ENCODE measurements at regions of chr2 and their contacts with region 1.

Region 1: GRCh38 chr2:96509114-96509846 is 4.1 kb upstream of the NEURL3 start:
- DNase-seq: peak; percentile 67 to 85
- ATAC-seq: peak; percentile 74 to 86
- H3K4me3 ChIP-seq: no peak overlapping the region
- H3K27ac ChIP-seq: peak overlapping the region in 1 of 2 experiments; percentile 40; a peak in 1 of 6 replicates
- H3K4me1 ChIP-seq: peaks cover 24% of the 10 kb centered on the region
- CTCF ChIP-seq: peak; percentile 89
- EP300 ChIP-seq: no peak
- POLR2A ChIP-seq: no peak
- RAD21 ChIP-seq: peak; percentile 95 to 97

Region 2: GRCh38 chr2:96344011-96344410 is 165.3 kb before region 1 on chr2:
- CTCF ChIA-PET with region 1: interaction called, 16 read pairs
- POLR2A ChIA-PET with region 1: interaction called, 3 read pairs
- DNase-seq: no peak
- ATAC-seq: no peak
- H3K4me3 ChIP-seq: no peak overlapping the region
- H3K27ac ChIP-seq: no peak overlapping the region
- H3K4me1 ChIP-seq: peaks cover 30% of the 10 kb centered on the region
- CTCF ChIP-seq: no peak
- EP300 ChIP-seq: no peak
- POLR2A ChIP-seq: no peak
- RAD21 ChIP-seq: no peak

Region 3: GRCh38 chr2:96389736-96390135 is 119.5 kb before region 1 on chr2:
- CTCF ChIA-PET with region 1: interaction called, 12 read pairs
- POLR2A ChIA-PET with region 1: no interaction called
- DNase-seq: no peak
- ATAC-seq: no peak
- H3K4me3 ChIP-seq: no peak overlapping the region
- H3K27ac ChIP-seq: no peak overlapping the region
- H3K4me1 ChIP-seq: no peaks in the 10 kb centered on the region
- CTCF ChIP-seq: no peak
- EP300 ChIP-seq: no peak
- POLR2A ChIP-seq: no peak
- RAD21 ChIP-seq: no peak

Region 4: GRCh38 chr2:96431319-96431718 is 78.0 kb before region 1 on chr2:
- CTCF ChIA-PET with region 1: interaction called, 16 read pairs
- POLR2A ChIA-PET with region 1: no interaction called
- DNase-seq: no peak
- ATAC-seq: no peak
- H3K4me3 ChIP-seq: no peak overlapping the region
- H3K27ac ChIP-seq: no peak overlapping the region
- H3K4me1 ChIP-seq: peaks cover 23% of the 10 kb centered on the region
- CTCF ChIP-seq: no peak
- EP300 ChIP-seq: no peak
- POLR2A ChIP-seq: no peak
- RAD21 ChIP-seq: no peak

Region 5: DNA sequence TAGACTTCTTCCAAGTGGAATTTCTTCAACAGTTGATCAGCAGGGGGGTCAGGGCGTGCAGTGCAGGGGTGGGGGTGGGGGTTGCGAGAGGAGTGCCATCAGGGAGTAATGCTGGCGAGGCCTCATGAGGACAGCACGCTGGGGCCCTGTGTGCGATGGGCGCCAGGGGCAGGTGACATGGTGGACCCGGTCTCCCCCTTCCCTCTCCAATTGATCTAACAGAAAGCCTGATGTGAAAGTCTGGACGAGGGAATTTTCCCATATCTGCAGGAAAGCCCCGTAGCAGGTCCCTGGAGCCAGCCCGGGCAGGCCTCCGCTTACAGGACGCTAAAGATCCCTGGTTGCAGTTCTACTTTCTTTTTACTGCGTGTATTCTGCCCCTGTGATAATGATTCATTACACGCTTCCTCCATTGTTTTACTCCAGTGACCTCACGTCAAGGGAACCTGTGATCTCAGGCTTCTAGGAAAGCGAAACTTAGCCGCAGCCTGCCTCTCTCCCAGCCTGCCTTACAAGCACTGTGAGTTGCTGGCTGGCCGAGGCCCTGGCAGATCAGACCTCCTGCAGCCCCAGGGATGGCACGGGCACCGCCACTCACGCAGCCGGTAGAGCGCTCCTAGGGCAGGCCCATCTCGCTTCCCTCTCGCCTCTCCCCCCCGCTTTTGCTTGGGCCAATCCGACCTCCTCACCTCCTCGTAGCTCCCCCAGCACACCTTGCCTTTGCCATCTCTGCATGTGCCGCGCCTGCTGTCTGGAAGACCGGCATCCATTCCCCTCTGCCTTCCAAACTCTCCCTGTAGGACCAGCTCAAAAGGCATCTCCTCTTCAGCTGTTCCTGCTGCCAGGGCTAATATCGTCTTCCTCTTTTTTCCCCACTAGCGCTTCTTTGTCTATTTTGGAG is 23.3 kb before region 1 on chr2:
- CTCF ChIA-PET with region 1: interaction called, 11 read pairs
- POLR2A ChIA-PET with region 1: no interaction called
- DNase-seq: no peak
- ATAC-seq: peak; percentile 13 to 39; a peak in 3 of 6 replicates
- H3K4me3 ChIP-seq: no peak overlapping the region
- H3K27ac ChIP-seq: no peak overlapping the region
- H3K4me1 ChIP-seq: no peaks in the 10 kb centered on the region
- CTCF ChIP-seq: no peak
- EP300 ChIP-seq: no peak
- POLR2A ChIP-seq: no peak
- RAD21 ChIP-seq: no peak

Region 6: DNA sequence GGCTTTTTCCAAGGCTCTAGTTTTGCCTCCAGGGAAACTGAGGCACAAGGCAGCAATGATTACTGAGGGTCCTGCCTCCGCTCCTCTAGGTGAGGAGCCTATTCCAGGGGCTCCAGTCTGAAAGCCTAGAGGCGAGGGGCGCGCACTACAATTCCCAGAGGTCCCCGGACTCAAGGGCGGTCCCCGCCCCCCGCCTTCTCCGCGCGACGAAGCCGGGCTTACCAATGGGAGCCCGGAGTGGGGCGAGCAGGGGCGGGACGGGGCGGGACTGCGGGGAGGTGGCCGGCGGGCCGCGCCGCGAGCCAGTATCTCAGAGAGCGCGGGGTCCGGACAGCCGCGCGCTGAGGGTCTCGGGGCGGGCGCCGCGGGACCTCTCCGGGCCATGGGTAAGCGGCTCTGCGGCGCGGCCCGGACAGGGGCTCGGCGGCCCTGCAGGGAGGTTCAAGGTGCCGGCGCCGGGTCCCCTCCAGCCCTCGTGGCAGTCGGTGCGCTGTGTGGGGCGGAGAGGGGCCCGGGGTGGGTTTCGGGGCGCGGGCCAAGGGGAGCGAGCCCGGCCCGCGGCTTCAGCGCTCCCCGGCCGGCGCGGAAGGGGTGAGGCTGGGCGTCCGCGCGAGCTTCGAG is 27.3 kb after region 1 on chr2 and contains the start of gene ARID5A:
- CTCF ChIA-PET with region 1: interaction called, 63 read pairs
- POLR2A ChIA-PET with region 1: interaction called, 3 read pairs
- DNase-seq: peak; percentile 84 to 90
- ATAC-seq: peak; percentile 85 to 96
- H3K4me3 ChIP-seq: peak within 1 kb of the TSS; percentile 99
- H3K27ac ChIP-seq: peak within 1 kb of the TSS; percentile 80 to 88
- H3K4me1 ChIP-seq: peaks cover 45% of the 10 kb centered on the region
- CTCF ChIP-seq: no peak
- EP300 ChIP-seq: no peak
- POLR2A ChIP-seq: peak; percentile 30
- RAD21 ChIP-seq: no peak
- polyA plus RNA-seq, gene ARID5A: 1.2 and 1.5 TPM in 2 replicates

Region 7: DNA sequence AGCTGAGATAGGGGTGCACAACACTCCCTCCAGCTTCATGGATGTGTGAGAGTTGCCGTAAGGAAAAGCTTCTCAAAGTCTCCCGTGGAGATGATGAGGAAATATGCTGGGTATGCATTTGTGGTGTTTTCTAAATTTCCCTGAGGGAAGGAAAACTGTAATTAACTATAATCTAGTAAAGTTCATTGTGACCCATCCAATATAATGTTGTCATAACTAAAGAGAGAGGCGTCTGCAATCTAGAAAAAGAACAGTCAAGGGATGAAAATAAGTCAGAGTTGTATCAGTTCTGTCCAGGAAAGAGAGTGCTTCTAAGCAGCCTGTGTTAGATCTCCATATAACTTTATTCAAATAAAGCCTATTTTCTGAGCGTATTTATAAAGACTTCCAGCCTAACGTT is 237.9 kb after region 1 on chr2:
- CTCF ChIA-PET with region 1: no interaction called
- POLR2A ChIA-PET with region 1: no interaction called
- DNase-seq: no peak
- ATAC-seq: no peak
- H3K4me3 ChIP-seq: no peak overlapping the region
- H3K27ac ChIP-seq: no peak overlapping the region
- H3K4me1 ChIP-seq: peaks cover 15% of the 10 kb centered on the region; the same call in 2 of the 3 replicates
- CTCF ChIP-seq: no peak
- EP300 ChIP-seq: no peak
- POLR2A ChIP-seq: no peak
- RAD21 ChIP-seq: no peak

Region 8: DNA sequence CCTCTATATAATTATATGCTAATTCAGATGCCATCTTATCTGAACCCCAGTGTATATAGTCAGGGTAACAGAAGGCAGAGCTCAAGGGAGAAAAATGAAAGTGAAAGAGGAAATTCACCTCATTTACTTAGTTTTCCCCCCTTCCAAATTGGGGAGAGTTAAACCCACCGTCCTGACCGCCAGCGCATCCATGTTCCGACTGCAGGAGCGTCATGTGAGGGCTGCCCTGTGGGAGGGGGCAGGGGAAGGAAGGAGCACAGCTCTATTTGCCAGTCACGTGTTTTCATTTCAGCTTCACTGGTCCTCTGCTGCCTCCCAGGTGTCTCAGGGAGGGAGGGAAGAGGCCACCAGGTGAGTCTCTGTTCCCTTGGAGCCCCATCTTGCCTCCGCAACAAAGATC is 264.6 kb after region 1 on chr2:
- CTCF ChIA-PET with region 1: no interaction called
- POLR2A ChIA-PET with region 1: no interaction called
- DNase-seq: no peak
- ATAC-seq: no peak
- H3K4me3 ChIP-seq: no peak overlapping the region
- H3K27ac ChIP-seq: no peak overlapping the region
- H3K4me1 ChIP-seq: peaks cover 3% of the 10 kb centered on the region; the same call in 1 of the 3 replicates
- CTCF ChIP-seq: no peak
- EP300 ChIP-seq: no peak
- POLR2A ChIP-seq: no peak
- RAD21 ChIP-seq: no peak

Measured in A549 (cell line).